ENCODE measurements at regions of chr11 and their contacts with region 1.

Region 1: GRCh38 chr11:117232092-117232878 is at the start of gene RNF214:
- DNase-seq: peak; percentile 79 to 84
- ATAC-seq: peak; percentile 81 to 93 (median 88)
- H3K4me3 ChIP-seq: peak within 1 kb of the TSS; percentile 51 to 100 (median 82)
- H3K27ac ChIP-seq: peak within 1 kb of the TSS; percentile 96 to 100 (median 98)
- H3K4me1 ChIP-seq: peaks cover 8 to 34% (median 30%) of the 10 kb centered on the region in 9 donors
- H3K27me3 ChIP-seq: no peaks in the 10 kb centered on the region
- CTCF ChIP-seq: peak; percentile 78 to 99 (median 94)
- total RNA-seq, gene RNF214: 20.3 to 33.5 (median 27.6) TPM

Region 2: GRCh38 chr11:116871248-116871647 is 361.0 kb before region 1 on chr11:
- intact Hi-C with region 1: loop called in 6 of 10 experiments (anchors 5 to 10 kb)
- DNase-seq: peak in 1 of 2 donors; percentile 44
- ATAC-seq: peak in 6 of 8 donors; percentile 40 to 75 (median 51)
- H3K4me3 ChIP-seq: no peak overlapping the region
- H3K27ac ChIP-seq: peak overlapping the region in 9 of 10 donors; percentile 9 to 73 (median 58)
- H3K4me1 ChIP-seq: peaks cover 0 to 89% (median 30%) of the 10 kb centered on the region in 9 donors
- H3K27me3 ChIP-seq: no peaks in the 10 kb centered on the region
- CTCF ChIP-seq: no peak

Region 3: GRCh38 chr11:117256573-117256972 is 24.3 kb after region 1 on chr11:
- intact Hi-C with region 1: no loop called
- DNase-seq: no peak
- ATAC-seq: no peak
- H3K4me3 ChIP-seq: no peak overlapping the region
- H3K27ac ChIP-seq: no peak overlapping the region
- H3K4me1 ChIP-seq: no peaks in the 10 kb centered on the region
- H3K27me3 ChIP-seq: no peaks in the 10 kb centered on the region
- CTCF ChIP-seq: no peak

Region 4: DNA sequence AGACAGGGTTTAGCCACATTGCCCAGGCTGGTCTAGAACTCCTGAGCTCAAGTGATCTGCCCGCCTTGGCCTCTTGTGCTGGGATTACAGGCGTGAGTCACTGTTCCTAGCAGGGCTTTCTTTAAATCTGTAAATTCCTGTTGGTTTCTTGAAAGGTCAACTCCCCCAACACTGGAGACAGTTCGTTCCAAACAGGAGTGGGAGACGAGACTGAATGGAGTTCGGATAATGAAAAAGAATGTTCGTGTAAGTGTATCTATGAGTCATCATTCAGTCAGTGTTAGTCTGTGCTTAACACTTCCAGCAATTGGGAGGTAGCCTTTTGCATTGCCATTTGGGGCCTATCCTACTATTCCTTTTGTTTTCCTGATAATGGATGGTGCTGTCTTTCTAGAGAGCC is 48.9 kb after region 1 on chr11:
- intact Hi-C with region 1: no loop called
- DNase-seq: no peak
- ATAC-seq: peak in 3 of 8 donors; percentile 8 to 66 (median 26)
- H3K4me3 ChIP-seq: no peak overlapping the region
- H3K27ac ChIP-seq: peak overlapping the region in 1 of 10 donors; percentile 13
- H3K4me1 ChIP-seq: peaks cover 0 to 7% (median 0%) of the 10 kb centered on the region in 9 donors
- H3K27me3 ChIP-seq: no peaks in the 10 kb centered on the region
- CTCF ChIP-seq: no peak

Region 5: DNA sequence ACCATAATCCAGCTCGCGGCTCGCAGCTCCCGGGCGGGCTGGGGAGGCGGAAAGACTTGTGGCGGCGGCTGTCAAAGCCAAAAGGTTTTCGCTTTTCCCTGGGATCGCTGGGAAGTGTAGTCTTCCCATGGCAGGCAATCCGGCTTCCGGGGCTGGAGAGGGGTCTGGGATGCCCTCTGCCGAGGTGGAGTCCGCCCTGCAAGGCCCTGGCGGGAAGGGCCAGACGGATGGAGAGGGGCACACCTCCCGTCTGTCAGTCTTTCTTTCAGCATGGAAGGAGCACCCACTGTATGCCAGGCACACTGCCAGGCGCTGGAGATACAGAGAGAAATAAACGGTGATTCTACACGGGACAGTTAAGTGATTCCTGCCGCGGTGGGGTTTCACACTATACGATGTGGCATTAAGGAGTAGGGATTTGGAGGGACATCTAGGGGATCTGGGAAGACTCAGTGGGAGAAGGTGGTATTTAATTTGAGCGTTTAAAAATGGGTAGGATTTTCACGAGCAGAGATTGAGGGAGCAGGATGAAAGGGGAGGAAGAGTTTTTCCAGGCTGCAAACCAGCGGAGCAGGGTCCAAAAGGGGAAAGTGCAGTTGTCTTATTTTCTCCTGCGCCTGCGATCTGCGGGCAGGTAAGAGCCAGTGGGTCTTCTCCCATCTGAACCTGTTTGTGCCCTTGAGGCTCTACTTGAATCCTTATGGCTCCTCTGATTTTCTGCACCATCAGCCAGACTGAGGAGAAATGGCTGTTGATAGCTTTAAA is 84.1 kb after region 1 on chr11 and contains the start of gene BACE1:
- intact Hi-C with region 1: loop called in 3 of 10 experiments (anchors 2 to 10 kb)
- DNase-seq: peak; percentile 83 to 90
- ATAC-seq: peak; percentile 92 to 97 (median 96)
- H3K4me3 ChIP-seq: peak within 1 kb of the TSS; percentile 65 to 95 (median 88)
- H3K27ac ChIP-seq: peak within 1 kb of the TSS in 9 of 10 donors; percentile 40 to 80 (median 69)
- H3K4me1 ChIP-seq: peaks cover 11 to 37% (median 22%) of the 10 kb centered on the region in 9 donors
- H3K27me3 ChIP-seq: peaks cover 0 to 8% (median 0%) of the 10 kb centered on the region in 7 donors
- CTCF ChIP-seq: peak in 8 of 9 donors; percentile 22 to 66 (median 39)
- total RNA-seq, gene BACE1: 10.8 to 18.7 (median 15.1) TPM

Region 6: GRCh38 chr11:117690484-117691217 is 458.4 kb after region 1 on chr11:
- intact Hi-C with region 1: no loop called
- DNase-seq: no peak
- ATAC-seq: peak in 2 of 8 donors; percentile 28 to 37
- H3K4me3 ChIP-seq: no peak overlapping the region
- H3K27ac ChIP-seq: no peak overlapping the region
- H3K4me1 ChIP-seq: peaks cover 7 to 17% (median 12%) of the 10 kb centered on the region in 9 donors
- H3K27me3 ChIP-seq: peaks cover 0 to 4% (median 0%) of the 10 kb centered on the region in 7 donors
- CTCF ChIP-seq: no peak